ENCODE measurements at regions of chr7 and their contacts with region 1.

Region 1: GRCh38 chr7:47266131-47266706 is 315.7 kb downstream of the TNS3 start:
- DNase-seq: peak; percentile 83
- H3K4me3 ChIP-seq: no peak overlapping the region; a peak in 1 of 4 replicates
- H3K27ac ChIP-seq: no peak overlapping the region
- H3K4me1 ChIP-seq: peaks cover 0 to 2% of the 10 kb centered on the region in 2 experiments; a peak in 1 of 4 replicates
- H3K27me3 ChIP-seq: no peaks in the 10 kb centered on the region
- CTCF ChIP-seq: peak; percentile 99
- EP300 ChIP-seq: no peak
- RAD21 ChIP-seq: peak; percentile 100

Region 2: GRCh38 chr7:46630031-46630430 is 636.2 kb before region 1 on chr7:
- CTCF ChIA-PET with region 1: no interaction called
- POLR2A ChIA-PET with region 1: no interaction called
- DNase-seq: no peak
- H3K4me3 ChIP-seq: no peak overlapping the region
- H3K27ac ChIP-seq: no peak overlapping the region
- H3K4me1 ChIP-seq: peaks cover 0 to 10% of the 10 kb centered on the region in 2 experiments; a peak in 1 of 4 replicates
- H3K27me3 ChIP-seq: no peaks in the 10 kb centered on the region
- CTCF ChIP-seq: no peak
- EP300 ChIP-seq: no peak
- RAD21 ChIP-seq: no peak

Region 3: DNA sequence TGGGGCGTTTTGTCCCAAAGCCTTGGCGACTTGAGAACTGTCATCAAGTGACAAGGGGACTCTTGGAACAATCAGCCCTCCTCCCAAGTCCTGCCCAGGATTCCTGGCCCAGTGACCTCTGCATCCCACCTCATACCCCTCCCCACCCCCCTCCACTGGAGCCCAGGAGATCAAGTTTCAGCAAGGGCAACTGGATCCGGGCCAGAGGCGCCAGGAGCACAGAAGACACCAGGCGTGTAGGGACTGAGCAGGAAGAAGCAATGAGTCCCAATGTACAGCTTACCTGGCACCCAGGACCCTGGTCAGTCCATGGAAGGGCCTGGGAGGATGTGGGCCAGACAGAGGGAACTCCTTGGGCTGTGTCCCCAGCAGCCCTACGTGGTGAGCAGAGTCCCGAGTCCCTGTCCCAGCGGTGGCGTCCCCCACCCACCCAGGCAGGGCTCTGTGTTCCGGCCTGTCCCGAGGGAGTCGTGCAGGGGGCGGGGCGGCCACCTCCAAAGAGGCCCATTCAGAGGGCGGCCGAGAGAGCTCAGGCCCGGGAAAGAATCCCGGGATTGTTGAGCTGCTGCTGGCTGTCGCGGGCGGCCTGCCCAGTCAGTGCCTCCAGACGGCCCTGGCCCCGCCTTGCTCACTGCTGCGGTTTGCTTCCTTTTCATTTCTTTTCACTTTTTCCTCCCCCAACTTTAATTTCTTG is 61.6 kb after region 1 on chr7:
- CTCF ChIA-PET with region 1: interaction called, 21 read pairs
- POLR2A ChIA-PET with region 1: no interaction called
- DNase-seq: peak; percentile 62
- H3K4me3 ChIP-seq: peak overlapping the region; percentile 6 to 16; a peak in 2 of 4 replicates
- H3K27ac ChIP-seq: peak overlapping the region; percentile 40 to 70
- H3K4me1 ChIP-seq: peaks cover 29 to 43% of the 10 kb centered on the region in 2 experiments
- H3K27me3 ChIP-seq: no peaks in the 10 kb centered on the region
- CTCF ChIP-seq: no peak
- EP300 ChIP-seq: no peak; a peak in 1 of 4 replicates
- RAD21 ChIP-seq: no peak

Region 4: GRCh38 chr7:47418601-47419381 is 152.6 kb after region 1 on chr7:
- CTCF ChIA-PET with region 1: interaction called, 11 read pairs
- POLR2A ChIA-PET with region 1: no interaction called
- DNase-seq: no peak
- H3K4me3 ChIP-seq: no peak overlapping the region
- H3K27ac ChIP-seq: no peak overlapping the region
- H3K4me1 ChIP-seq: peaks cover 0 to 3% of the 10 kb centered on the region in 2 experiments; a peak in 1 of 4 replicates
- H3K27me3 ChIP-seq: no peaks in the 10 kb centered on the region
- CTCF ChIP-seq: no peak
- EP300 ChIP-seq: no peak
- RAD21 ChIP-seq: no peak

Region 5: DNA sequence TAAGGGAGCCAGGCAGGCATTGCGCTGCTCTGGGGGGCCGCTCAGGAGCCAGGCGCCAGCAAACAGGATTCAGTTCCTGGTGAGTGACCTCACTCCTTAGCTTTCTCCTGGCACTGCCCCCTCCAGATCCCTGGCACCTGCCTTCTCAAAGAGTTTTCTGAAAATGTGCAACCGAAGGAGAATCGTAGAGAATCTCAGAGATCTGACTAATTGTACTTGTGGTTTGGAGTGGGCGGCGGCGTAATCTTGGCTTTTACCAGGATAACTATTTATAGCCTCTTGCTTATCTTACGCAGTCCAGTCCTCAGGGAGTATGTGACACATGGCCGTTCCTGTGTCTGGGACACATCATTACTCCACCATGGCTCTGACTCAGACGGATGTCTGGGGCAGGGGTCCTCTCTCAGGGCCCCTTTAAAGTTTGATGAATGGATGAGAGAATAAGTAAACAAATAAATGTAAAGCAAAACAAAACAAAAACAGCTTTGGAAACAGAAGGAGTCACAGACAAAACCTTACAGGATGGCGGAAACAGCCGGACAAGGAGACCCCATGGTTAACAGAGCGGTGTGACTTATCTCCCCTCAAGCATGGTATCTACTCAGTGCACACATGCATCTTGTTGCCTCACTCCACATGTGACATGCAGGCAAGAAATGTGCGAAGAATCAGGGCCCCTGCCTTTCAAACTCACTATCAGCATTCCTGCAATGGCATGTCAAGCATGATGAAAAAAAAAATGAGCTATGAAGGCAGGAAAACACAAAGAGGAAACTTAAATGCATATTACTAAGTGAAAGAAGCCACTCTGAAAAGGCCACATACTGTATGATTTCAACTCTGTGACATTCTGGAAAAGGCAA is 216.0 kb after region 1 on chr7:
- CTCF ChIA-PET with region 1: interaction called, 24 read pairs
- POLR2A ChIA-PET with region 1: no interaction called
- DNase-seq: peak; percentile 81
- H3K4me3 ChIP-seq: 0 out of 4 replicates have a peak overlapping the region, but pooled peaks of 1 of the 2 experiments have one; percentile 9
- H3K27ac ChIP-seq: peak overlapping the region; percentile 67 to 92
- H3K4me1 ChIP-seq: peaks cover 29 to 53% of the 10 kb centered on the region in 2 experiments
- H3K27me3 ChIP-seq: no peaks in the 10 kb centered on the region
- CTCF ChIP-seq: no peak
- EP300 ChIP-seq: peak; percentile 63 to 89; a peak in 2 of 4 replicates
- RAD21 ChIP-seq: no peak

Region 6: GRCh38 chr7:47763063-47763974 is 497.1 kb after region 1 on chr7:
- CTCF ChIA-PET with region 1: interaction called, 11 read pairs
- POLR2A ChIA-PET with region 1: no interaction called
- DNase-seq: peak; percentile 80
- H3K4me3 ChIP-seq: peak overlapping the region; percentile 8 to 9; a peak in 1 of 4 replicates
- H3K27ac ChIP-seq: peak overlapping the region; percentile 99
- H3K4me1 ChIP-seq: peaks cover 27 to 33% of the 10 kb centered on the region in 2 experiments
- H3K27me3 ChIP-seq: no peaks in the 10 kb centered on the region
- CTCF ChIP-seq: no peak
- EP300 ChIP-seq: peak; percentile 99
- RAD21 ChIP-seq: peak; percentile 25

Region 7: GRCh38 chr7:47846117-47846836 is 580.1 kb after region 1 on chr7:
- CTCF ChIA-PET with region 1: interaction called, 10 read pairs
- POLR2A ChIA-PET with region 1: no interaction called
- DNase-seq: no peak
- H3K4me3 ChIP-seq: no peak overlapping the region
- H3K27ac ChIP-seq: no peak overlapping the region
- H3K4me1 ChIP-seq: no peaks in the 10 kb centered on the region; a peak in 2 of 4 replicates
- H3K27me3 ChIP-seq: peaks cover 6% of the 10 kb centered on the region; the same call in 1 of the 2 replicates
- CTCF ChIP-seq: no peak
- EP300 ChIP-seq: no peak
- RAD21 ChIP-seq: no peak

Measured in SK-N-SH (cell line).